MCF 10A (cell line): ENCODE measurements at regions of chr9 and their contacts with region 1.

Region 1: GRCh38 chr9:100598641-100599145 is 20.8 kb downstream of the CAVIN4 start:
- DNase-seq: peak; percentile 73
- H3K4me3 Mint-ChIP-seq: peak overlapping the region; percentile 69
- H3K27ac Mint-ChIP-seq: no peak overlapping the region
- H3K4me1 Mint-ChIP-seq: peaks cover 16% of the 10 kb centered on the region
- H3K27me3 Mint-ChIP-seq: peaks cover 14% of the 10 kb centered on the region
- CTCF ChIP-seq: no peak

Region 2: DNA sequence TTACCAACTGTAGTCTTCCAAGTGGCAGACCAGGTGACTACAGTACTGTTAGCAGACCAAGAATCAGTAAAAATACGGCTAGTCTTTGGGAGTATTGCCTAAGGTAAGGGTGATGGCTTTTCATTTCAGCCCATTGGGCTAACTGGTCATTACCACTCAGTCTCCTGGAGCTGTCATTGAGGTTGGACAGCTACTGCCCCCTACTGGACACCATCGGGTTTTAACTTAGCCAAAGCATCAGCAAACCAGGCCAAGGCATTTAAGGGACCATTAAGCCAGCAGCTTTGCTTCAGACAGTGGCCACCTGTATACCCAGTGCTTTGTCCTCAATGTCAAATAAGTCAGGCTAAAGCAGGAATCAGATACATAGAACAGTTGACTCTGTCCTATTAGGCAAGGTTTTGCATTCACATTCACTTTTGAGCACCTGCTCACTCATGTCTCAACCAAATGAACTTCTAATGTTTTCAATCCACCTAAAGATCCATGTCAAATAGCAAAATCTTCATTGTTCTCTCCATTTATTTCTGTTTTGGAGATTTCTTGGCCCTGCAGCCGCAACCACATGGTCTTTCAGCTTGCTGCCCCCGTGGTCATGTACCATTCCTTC is 382.4 kb before region 1 on chr9:
- CTCF ChIA-PET with region 1: interaction called, 9 read pairs
- POLR2A ChIA-PET with region 1: no interaction called
- intact Hi-C with region 1: loop called (anchors 5 kb)
- DNase-seq: peak; percentile 74
- H3K4me3 Mint-ChIP-seq: no peak overlapping the region
- H3K27ac Mint-ChIP-seq: no peak overlapping the region
- H3K4me1 Mint-ChIP-seq: no peaks in the 10 kb centered on the region
- H3K27me3 Mint-ChIP-seq: no peaks in the 10 kb centered on the region
- CTCF ChIP-seq: peak; percentile 60

Region 3: DNA sequence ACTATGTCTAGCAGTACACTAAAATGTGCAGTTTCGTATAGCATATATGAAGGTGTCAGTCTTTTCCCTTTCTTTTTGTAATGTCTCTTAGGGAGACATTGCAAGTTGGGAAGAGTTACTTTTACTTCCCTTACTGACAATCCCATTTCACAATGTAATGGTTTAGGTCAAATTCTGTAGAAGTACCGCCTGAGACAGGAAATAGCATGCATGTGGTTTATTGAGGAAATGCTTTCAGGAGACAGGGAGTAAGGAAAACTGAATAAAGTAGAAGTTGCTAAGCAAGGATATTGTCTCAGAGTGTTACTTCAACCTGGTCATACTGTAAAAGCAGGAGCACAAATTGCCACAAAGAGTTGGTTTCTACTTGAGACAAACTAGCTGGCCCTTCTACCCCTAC is 203.9 kb before region 1 on chr9:
- CTCF ChIA-PET with region 1: no interaction called
- POLR2A ChIA-PET with region 1: no interaction called
- intact Hi-C with region 1: no loop called
- DNase-seq: no peak
- H3K4me3 Mint-ChIP-seq: no peak overlapping the region
- H3K27ac Mint-ChIP-seq: no peak overlapping the region
- H3K4me1 Mint-ChIP-seq: no peaks in the 10 kb centered on the region
- H3K27me3 Mint-ChIP-seq: no peaks in the 10 kb centered on the region
- CTCF ChIP-seq: no peak

Region 4: GRCh38 chr9:100437860-100438805 is 160.6 kb before region 1 on chr9:
- CTCF ChIA-PET with region 1: interaction called, 15 read pairs
- POLR2A ChIA-PET with region 1: no interaction called
- intact Hi-C with region 1: no loop called
- DNase-seq: peak; percentile 82
- H3K4me3 Mint-ChIP-seq: no peak overlapping the region
- H3K27ac Mint-ChIP-seq: peak overlapping the region; percentile 66
- H3K4me1 Mint-ChIP-seq: peaks cover 5% of the 10 kb centered on the region
- H3K27me3 Mint-ChIP-seq: no peaks in the 10 kb centered on the region
- CTCF ChIP-seq: peak; percentile 74

Region 5: DNA sequence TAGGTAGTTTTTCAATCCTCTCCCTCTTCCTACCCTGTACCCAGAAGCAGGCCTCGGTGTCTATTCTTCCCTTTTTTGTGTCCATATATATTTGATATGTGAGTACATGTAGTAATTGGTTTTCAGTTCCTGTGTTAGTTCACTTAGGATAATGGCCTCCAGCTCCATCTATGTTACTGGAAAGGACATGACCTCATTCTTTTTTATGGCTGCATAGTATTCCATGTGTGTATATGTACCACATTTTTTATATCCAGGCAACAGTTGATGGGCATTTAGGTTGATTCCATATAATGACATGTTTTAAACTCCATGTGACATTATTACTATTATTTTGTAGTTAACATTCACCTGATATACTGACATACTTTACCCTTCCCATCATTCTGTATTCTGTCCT is 28.3 kb after region 1 on chr9:
- CTCF ChIA-PET with region 1: interaction called, 27 read pairs
- POLR2A ChIA-PET with region 1: no interaction called
- intact Hi-C with region 1: no loop called
- DNase-seq: no peak
- H3K4me3 Mint-ChIP-seq: no peak overlapping the region
- H3K27ac Mint-ChIP-seq: no peak overlapping the region
- H3K4me1 Mint-ChIP-seq: no peaks in the 10 kb centered on the region
- H3K27me3 Mint-ChIP-seq: no peaks in the 10 kb centered on the region
- CTCF ChIP-seq: no peak

Region 6: GRCh38 chr9:100856238-100856637 is 257.5 kb after region 1 on chr9:
- CTCF ChIA-PET with region 1: no interaction called
- POLR2A ChIA-PET with region 1: no interaction called
- intact Hi-C with region 1: no loop called
- DNase-seq: no peak
- H3K4me3 Mint-ChIP-seq: no peak overlapping the region
- H3K27ac Mint-ChIP-seq: no peak overlapping the region
- H3K4me1 Mint-ChIP-seq: no peaks in the 10 kb centered on the region
- H3K27me3 Mint-ChIP-seq: peaks cover 15% of the 10 kb centered on the region
- CTCF ChIP-seq: no peak

Region 7: GRCh38 chr9:101119206-101119819 is 520.6 kb after region 1 on chr9:
- CTCF ChIA-PET with region 1: interaction called, 35 read pairs
- POLR2A ChIA-PET with region 1: no interaction called
- intact Hi-C with region 1: loop called (anchors 1 kb)
- DNase-seq: peak; percentile 64
- H3K4me3 Mint-ChIP-seq: no peak overlapping the region
- H3K27ac Mint-ChIP-seq: no peak overlapping the region
- H3K4me1 Mint-ChIP-seq: no peaks in the 10 kb centered on the region
- H3K27me3 Mint-ChIP-seq: peaks cover 47% of the 10 kb centered on the region
- CTCF ChIP-seq: peak; percentile 75

Region 8: GRCh38 chr9:101387871-101388506 is 789.3 kb after region 1 on chr9:
- CTCF ChIA-PET with region 1: interaction called, 18 read pairs
- POLR2A ChIA-PET with region 1: no interaction called
- intact Hi-C with region 1: loop called (anchors 5 kb)
- DNase-seq: peak; percentile 56
- H3K4me3 Mint-ChIP-seq: no peak overlapping the region
- H3K27ac Mint-ChIP-seq: no peak overlapping the region
- H3K4me1 Mint-ChIP-seq: peaks cover 18% of the 10 kb centered on the region
- H3K27me3 Mint-ChIP-seq: no peaks in the 10 kb centered on the region
- CTCF ChIP-seq: peak; percentile 58